ENCODE measurements at regions of chr1 and their contacts with region 1.

Region 1: GRCh38 chr1:29944253-29944905 is 708.1 kb downstream of the PTPRU start:
- DNase-seq: no peak
- H3K4me3 ChIP-seq: no peak overlapping the region
- H3K27ac ChIP-seq: no peak overlapping the region
- H3K4me1 ChIP-seq: no peaks in the 10 kb centered on the region
- H3K27me3 ChIP-seq: no peaks in the 10 kb centered on the region
- CTCF ChIP-seq: no peak
- EP300 ChIP-seq: no peak
- POLR2A ChIP-seq: no peak

Region 2: DNA sequence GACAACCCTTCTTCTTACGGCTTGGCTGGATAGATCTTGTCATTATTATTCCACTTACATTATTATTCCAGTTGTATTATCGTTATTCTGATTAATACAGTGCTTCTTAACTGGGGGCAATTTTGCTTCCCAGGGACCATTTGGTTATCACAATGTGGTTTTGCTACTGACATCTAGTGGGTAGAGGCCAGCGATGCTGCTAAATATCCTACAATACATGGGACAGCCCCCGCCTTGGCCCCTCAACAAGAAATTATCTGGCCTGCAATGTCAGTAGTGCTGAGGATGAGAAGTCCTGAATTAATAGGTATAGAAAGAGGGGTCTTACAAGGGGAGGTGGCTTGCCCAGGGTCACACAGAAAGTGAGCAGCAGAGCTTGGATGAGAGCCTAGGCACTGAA is 602.4 kb before region 1 on chr1:
- intact Hi-C with region 1: no loop called
- DNase-seq: no peak
- H3K4me3 ChIP-seq: no peak overlapping the region
- H3K27ac ChIP-seq: no peak overlapping the region
- H3K4me1 ChIP-seq: no peaks in the 10 kb centered on the region
- H3K27me3 ChIP-seq: no peaks in the 10 kb centered on the region
- CTCF ChIP-seq: no peak
- EP300 ChIP-seq: no peak
- POLR2A ChIP-seq: no peak

Region 3: GRCh38 chr1:29767088-29767685 is 177.2 kb before region 1 on chr1:
- intact Hi-C with region 1: loop called in 1 of 4 experiments (anchors 5 kb)
- DNase-seq: no peak
- H3K4me3 ChIP-seq: no peak overlapping the region
- H3K27ac ChIP-seq: no peak overlapping the region
- H3K4me1 ChIP-seq: no peaks in the 10 kb centered on the region
- H3K27me3 ChIP-seq: no peaks in the 10 kb centered on the region
- CTCF ChIP-seq: no peak
- EP300 ChIP-seq: no peak
- POLR2A ChIP-seq: no peak